Mucosa of descending colon (tissue), 3 donors: ENCODE measurements at regions of chr12 and their contacts with region 1.

Region 1: DNA sequence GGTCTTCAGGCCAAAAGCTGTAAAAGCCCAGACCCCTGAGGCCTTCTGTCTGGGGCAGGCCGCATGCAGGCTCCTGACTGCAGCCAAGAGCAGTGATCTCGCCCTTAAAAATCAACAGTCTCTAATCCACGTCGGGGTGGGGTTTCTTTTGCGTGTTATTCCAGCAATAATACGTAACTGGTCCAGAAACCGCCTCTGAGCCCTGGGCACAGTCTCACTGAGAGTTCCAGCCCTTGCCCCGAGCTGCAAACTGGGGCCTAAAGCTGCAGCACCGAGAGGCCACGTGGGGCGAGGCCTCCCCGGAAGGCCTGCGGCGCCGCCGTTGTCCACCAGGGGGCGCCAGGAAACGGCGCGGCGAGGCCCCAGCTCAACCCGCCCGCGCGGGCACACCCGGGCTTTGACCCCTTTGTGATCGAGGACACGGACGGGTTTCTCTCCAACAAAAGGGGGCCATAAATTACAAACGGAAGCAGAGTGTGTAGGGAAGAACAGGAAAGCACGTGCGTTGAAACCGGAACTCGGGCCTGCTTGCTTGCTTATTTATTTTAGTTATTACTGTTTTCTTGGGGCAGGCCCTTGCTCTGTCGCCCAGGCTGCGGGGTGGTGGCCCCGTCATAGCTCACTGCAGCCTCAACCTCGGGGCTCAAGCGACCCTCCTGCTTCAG is 87.2 kb downstream of the NINJ2 start:
- DNase-seq: peak; percentile 85 to 91 (median 87)
- ATAC-seq: peak; percentile 90
- H3K4me3 ChIP-seq: no peak overlapping the region
- H3K4me1 ChIP-seq: peaks cover 13% of the 10 kb centered on the region
- CTCF ChIP-seq: peak; percentile 99

Region 2: DNA sequence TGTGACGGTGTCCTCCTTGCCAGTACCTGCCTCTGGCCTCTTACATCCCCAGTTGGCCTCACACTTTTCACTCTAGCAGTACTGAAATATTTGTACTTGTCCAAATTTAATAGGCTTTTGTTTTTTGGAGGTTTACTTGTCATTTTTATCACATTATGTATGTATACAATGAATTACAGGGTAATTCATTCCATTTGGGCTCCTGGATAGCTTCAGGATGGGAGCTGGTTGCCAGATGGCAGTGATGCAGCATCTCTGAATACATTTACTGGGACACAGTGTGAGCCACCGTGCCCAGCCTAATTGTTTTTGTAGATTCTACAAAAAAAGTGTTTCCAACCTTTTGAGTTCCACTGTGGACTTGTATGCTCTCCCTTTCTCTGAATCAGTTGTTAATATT is 161.2 kb before region 1 on chr12:
- intact Hi-C with region 1: no loop called
- DNase-seq: no peak
- ATAC-seq: no peak
- H3K4me3 ChIP-seq: no peak overlapping the region
- H3K4me1 ChIP-seq: no peaks in the 10 kb centered on the region
- CTCF ChIP-seq: no peak

Region 3: DNA sequence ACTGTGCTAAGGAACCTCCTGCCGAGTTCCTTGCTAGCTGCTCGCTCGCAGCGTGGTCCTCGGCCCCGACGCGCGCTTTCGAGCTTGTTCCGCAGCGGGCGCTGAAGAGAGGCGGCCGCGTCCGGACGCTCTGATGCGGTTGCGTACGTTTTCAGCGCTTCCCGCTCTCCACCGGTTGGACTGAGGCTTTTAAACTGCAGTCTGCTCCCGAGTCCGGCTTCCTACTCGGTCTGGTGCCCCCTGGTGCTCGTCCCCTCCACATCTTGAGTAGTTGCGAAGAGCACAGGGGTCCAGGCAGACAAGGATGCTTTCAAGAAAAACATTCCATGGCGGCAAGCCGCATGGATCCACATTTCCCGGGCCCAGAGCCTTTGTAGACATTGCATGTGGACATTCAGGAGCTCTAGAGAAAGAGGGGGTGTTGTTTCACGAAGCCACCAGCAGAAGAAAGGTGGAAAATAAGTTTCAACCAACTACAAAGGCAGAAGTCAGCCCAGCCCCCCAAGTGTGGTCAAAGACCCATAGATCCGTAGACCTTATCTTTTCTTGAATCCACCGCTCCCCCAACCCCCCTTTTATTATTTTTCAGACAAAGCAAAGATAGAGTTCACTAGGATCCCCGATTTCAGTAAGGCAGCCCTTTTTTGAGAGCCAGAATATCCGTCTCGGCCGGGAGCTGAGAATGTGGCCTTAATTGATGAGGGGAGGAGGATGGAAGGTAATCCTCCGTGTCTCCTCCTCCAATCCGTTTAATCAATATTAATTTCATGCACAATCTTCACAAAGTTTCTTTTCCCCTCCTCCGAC is 175.3 kb after region 1 on chr12:
- intact Hi-C with region 1: loop called in 1 of 2 experiments (anchors 10 kb)
- DNase-seq: peak; percentile 91 to 95 (median 93)
- ATAC-seq: peak; percentile 66
- H3K4me3 ChIP-seq: no peak overlapping the region
- H3K4me1 ChIP-seq: peaks cover 12% of the 10 kb centered on the region
- CTCF ChIP-seq: peak; percentile 64

Region 4: DNA sequence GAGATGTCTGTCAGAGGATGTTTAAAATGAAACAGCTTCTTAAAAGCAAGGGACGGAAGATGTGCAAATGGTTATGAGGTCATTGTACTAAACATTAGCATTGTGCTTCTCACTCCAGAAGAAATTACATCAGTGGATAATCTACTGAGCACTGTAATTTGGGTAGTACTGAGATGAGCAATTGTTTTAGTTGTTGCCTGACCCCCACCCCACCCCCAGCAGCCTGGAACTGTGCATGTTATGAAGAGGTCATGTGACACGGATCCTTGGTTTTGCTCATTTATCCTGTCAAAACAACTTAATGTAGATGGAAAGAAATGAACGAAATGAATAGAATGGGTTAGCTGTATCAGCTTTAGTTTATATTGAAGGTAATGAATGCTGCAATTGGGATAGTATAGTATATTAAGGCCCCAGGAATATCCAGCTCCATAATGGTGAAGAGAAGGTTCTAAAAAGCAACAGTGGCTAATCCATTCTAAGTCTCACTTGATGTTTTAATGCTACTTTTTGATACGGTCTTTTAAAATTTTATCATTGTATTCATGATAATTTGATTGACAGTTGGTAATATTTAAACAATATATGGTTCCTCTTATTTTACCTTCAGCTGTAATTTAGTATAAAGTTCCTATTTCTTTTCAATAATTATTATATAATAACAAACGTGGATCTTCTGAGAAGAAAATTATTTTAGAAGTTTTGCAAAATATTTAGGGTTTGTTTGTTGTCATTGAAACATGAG is 234.8 kb after region 1 on chr12:
- intact Hi-C with region 1: loop called (anchors 10 kb)
- DNase-seq: no peak
- ATAC-seq: no peak
- H3K4me3 ChIP-seq: no peak overlapping the region
- H3K4me1 ChIP-seq: peaks cover 5% of the 10 kb centered on the region
- CTCF ChIP-seq: no peak

Region 5: GRCh38 chr12:949453-950191 is 373.5 kb after region 1 on chr12 and contains the start of gene RAD52:
- intact Hi-C with region 1: loop called in 1 of 2 experiments (anchors 10 kb)
- DNase-seq: peak; percentile 98
- ATAC-seq: peak; percentile 93
- H3K4me3 ChIP-seq: peak within 1 kb of the TSS; percentile 61
- H3K4me1 ChIP-seq: peaks cover 22% of the 10 kb centered on the region
- CTCF ChIP-seq: peak; percentile 94
- total RNA-seq, gene RAD52: 16.3 to 32.0 (median 28.9) TPM